ENCODE measurements at regions of chr16 and their contacts with region 1.

Region 1: DNA sequence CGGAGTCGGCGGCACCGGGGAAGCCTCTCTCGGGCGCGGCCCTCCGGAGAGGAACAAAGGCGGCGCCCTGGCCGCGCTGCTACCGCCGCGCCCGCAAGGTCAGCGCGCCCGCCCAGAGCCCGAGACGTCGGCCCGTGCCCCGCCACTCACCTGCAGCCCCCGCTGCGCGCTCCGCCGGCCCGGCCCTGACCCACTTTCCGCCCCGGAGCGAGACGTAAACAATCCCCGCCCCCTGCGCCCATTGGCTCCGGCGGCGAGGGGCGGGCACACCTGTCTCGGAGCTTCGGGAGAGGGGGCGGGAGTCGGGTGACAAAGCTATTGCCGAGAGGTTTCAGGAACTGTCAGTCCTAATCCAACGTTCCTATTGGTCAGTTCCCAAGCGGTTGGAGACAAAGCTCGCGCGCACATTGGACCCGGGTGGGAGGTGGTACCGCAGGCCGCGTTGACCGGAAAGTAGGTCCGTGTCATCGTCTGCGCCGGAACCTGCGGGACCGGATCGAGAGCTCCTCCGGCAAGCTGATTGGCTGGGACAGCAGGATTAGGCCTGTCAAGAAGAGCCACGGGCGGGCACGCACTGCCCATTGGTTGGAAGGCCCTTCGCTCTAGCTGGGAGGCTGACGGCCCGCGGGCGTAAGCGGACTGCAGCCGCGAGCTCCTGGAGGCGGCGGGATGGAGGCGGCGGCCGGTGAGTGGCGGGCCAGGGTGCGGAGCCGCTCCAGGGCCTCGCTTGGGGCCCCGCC is at the starts of genes NUBP2 and SPSB3:
- DNase-seq: peak; percentile 99
- H3K4me3 Mint-ChIP-seq: peak within 1 kb of the TSS; percentile 93
- H3K27ac Mint-ChIP-seq: peak within 1 kb of the TSS; percentile 85
- H3K4me1 Mint-ChIP-seq: peaks cover 9% of the 10 kb centered on the region
- H3K27me3 Mint-ChIP-seq: peaks cover 2% of the 10 kb centered on the region
- total RNA-seq, gene NUBP2: 77.4 and 81.1 TPM in 2 replicates
- total RNA-seq, gene SPSB3: 24.6 and 24.9 TPM in 2 replicates

Region 2: DNA sequence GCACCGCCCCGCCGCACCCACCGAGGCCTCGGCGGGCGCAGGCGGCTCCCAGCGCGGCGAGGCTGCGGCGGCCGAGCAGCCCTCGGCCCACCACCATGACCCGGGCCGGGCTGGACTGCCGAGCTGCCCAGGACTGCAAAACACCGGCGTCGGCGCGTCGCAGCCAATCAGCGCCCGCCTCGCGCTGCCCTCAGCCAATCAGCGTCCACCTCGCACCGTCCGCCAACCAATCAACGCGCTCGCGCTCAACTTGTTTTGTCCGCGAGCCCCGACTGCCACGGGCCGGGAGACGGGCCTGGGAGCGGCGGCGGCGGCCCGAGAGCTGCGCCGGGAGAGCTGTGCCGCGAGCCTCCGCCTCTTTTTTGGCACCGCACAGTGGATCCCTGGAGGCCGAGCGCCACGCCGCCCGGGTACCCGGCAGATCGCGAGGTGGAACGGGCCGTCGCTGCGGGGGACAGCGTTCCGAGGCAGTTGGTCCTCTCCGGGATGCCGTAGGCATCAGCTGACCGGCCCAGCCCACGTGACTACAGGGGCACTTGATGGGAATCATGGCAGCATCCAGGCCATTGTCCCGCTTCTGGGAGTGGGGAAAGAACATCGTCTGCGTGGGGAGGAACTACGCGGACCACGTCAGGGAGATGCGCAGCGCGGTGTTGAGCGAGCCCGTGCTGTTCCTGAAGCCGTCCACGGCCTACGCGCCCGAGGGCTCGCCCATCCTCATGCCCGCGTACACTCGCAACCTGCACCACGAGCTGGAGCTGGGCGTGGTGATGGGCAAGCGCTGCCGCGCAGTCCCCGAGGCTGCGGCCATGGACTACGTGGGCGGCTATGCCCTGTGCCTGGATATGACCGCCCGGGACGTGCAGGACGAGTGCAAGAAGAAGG is 44.4 kb after region 1 on chr16 and contains the starts of genes FAHD1 and HAGH:
- intact Hi-C with region 1: loop called (anchors 2 kb)
- DNase-seq: peak; percentile 98
- H3K4me3 Mint-ChIP-seq: peak within 1 kb of the TSS; percentile 97
- H3K27ac Mint-ChIP-seq: peak within 1 kb of the TSS; percentile 89
- H3K4me1 Mint-ChIP-seq: peaks cover 25% of the 10 kb centered on the region
- H3K27me3 Mint-ChIP-seq: no peaks in the 10 kb centered on the region
- total RNA-seq, gene FAHD1: 20.2 and 21.7 TPM in 2 replicates
- total RNA-seq, gene HAGH: 50.3 and 57.7 TPM in 2 replicates

Region 3: GRCh38 chr16:2003827-2004641 is 221.5 kb after region 1 on chr16:
- intact Hi-C with region 1: no loop called
- DNase-seq: peak; percentile 97
- H3K4me3 Mint-ChIP-seq: no peak overlapping the region
- H3K27ac Mint-ChIP-seq: no peak overlapping the region
- H3K4me1 Mint-ChIP-seq: peaks cover 30% of the 10 kb centered on the region
- H3K27me3 Mint-ChIP-seq: no peaks in the 10 kb centered on the region